T-cell (primary cell): ENCODE measurements at regions of chr14 and their contacts with region 1.

Region 1: GRCh38 chr14:97572583-97573458 is 775.6 kb downstream of the VRK1 start:
- DNase-seq: no peak
- ATAC-seq: no peak
- H3K4me3 ChIP-seq: no peak overlapping the region
- H3K4me3 Mint-ChIP-seq: no peak overlapping the region
- H3K27ac ChIP-seq: no peak overlapping the region
- H3K27ac Mint-ChIP-seq: no peak overlapping the region
- H3K4me1 ChIP-seq: no peaks in the 10 kb centered on the region
- H3K4me1 Mint-ChIP-seq: peaks cover 3 to 6% (median 5%) of the 10 kb centered on the region in 3 donors
- H3K27me3 ChIP-seq: no peaks in the 10 kb centered on the region
- H3K27me3 Mint-ChIP-seq: no peaks in the 10 kb centered on the region

Region 2: GRCh38 chr14:96017882-96018281 is 1554.9 kb before region 1 on chr14:
- CTCF ChIA-PET with region 1: no interaction called
- POLR2A ChIA-PET with region 1: no interaction called
- DNase-seq: no peak
- ATAC-seq: no peak
- H3K4me3 ChIP-seq: no peak overlapping the region
- H3K4me3 Mint-ChIP-seq: no peak overlapping the region
- H3K27ac ChIP-seq: no peak overlapping the region
- H3K27ac Mint-ChIP-seq: no peak overlapping the region
- H3K4me1 ChIP-seq: no peaks in the 10 kb centered on the region
- H3K4me1 Mint-ChIP-seq: no peaks in the 10 kb centered on the region
- H3K27me3 ChIP-seq: peaks cover 0 to 15% of the 10 kb centered on the region in 2 experiments
- H3K27me3 Mint-ChIP-seq: peaks cover 41 to 48% of the 10 kb centered on the region in 2 donors

Region 3: DNA sequence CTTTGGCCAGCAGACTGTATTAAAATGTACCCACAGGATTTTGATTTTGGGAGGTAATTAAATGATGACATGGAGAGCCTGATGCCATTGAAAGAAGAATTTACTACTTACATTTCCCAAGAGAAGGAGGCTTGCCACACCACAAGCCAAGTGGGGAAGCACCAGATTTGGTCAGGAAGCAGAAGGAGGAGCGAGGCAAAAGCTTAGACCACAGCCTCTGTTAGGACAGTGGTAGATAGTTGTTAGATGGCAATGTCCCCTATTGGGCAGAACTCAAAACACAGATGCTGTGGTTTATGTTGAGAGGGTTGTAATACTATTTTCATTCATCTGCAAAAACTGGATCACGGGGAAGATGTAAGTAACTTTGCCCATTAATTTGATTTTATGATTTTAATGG is 66.2 kb before region 1 on chr14:
- CTCF ChIA-PET with region 1: no interaction called
- POLR2A ChIA-PET with region 1: no interaction called
- DNase-seq: no peak
- ATAC-seq: no peak
- H3K4me3 ChIP-seq: no peak overlapping the region
- H3K4me3 Mint-ChIP-seq: no peak overlapping the region
- H3K27ac ChIP-seq: no peak overlapping the region
- H3K27ac Mint-ChIP-seq: no peak overlapping the region
- H3K4me1 ChIP-seq: no peaks in the 10 kb centered on the region
- H3K4me1 Mint-ChIP-seq: peaks cover 0 to 3% (median 0%) of the 10 kb centered on the region in 3 donors
- H3K27me3 ChIP-seq: no peaks in the 10 kb centered on the region
- H3K27me3 Mint-ChIP-seq: no peaks in the 10 kb centered on the region

Region 4: DNA sequence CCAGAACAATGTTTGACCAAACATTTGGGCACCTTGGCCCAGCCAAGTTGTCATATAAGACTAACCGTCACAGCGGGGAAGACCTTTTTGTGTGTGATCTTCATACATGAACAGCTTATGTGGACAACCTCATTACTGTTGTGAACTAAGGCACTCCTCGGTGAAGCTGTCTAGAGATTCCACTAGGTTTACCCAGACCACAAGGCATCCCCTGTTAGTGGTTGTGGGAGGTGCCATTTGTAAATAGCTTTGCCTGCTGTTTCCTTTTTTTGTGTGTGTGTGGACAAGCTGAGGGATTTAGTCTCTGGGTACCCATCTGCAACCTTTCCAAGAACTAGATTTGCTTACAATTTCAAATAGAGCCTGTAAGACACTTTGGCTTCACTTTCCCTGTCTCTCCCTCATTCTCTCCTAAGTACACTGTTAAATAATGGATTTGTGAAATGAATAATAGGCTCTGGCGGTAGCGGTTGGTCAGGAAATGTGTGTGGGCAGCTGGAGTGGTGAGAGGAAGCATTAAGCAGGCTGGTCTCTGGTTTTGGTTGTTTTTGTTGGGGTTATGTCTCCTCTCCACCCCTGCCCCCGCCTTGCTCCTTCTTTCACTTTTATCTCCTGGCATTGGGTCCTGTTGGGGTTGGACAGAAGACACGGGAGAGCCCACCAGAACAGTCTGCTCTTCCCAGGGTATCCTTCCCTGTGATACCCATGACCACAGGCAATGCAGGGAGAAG is 48.1 kb before region 1 on chr14:
- CTCF ChIA-PET with region 1: no interaction called
- POLR2A ChIA-PET with region 1: interaction called in 1 of 2 experiments, 13 read pairs
- DNase-seq: no peak
- ATAC-seq: no peak
- H3K4me3 ChIP-seq: no peak overlapping the region
- H3K4me3 Mint-ChIP-seq: peak overlapping the region in 2 of 3 donors; percentile 25 to 27
- H3K27ac ChIP-seq: no peak overlapping the region
- H3K27ac Mint-ChIP-seq: peak overlapping the region in 1 of 2 donors; percentile 6
- H3K4me1 ChIP-seq: peaks cover 0 to 10% of the 10 kb centered on the region in 2 experiments
- H3K4me1 Mint-ChIP-seq: peaks cover 7 to 14% (median 11%) of the 10 kb centered on the region in 3 donors
- H3K27me3 ChIP-seq: no peaks in the 10 kb centered on the region
- H3K27me3 Mint-ChIP-seq: no peaks in the 10 kb centered on the region

Region 5: DNA sequence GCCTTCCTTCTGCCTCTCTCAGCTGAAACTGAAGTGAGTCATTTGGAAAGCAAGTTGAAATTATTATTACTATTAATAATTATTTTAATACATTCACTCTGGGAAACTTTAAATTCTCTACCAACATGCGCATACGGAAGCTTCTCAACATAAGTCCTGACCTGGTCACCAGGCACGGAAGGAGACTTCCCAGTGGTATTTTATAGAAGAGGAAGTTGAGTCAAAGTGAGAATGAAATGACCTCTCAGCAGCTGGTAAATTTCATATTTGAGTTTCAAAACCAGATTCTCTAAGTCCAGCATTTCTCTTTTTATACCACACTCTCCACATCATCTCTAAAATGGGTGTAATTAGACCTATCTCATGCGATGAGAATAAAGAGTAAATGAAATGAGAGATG is 28.2 kb before region 1 on chr14:
- CTCF ChIA-PET with region 1: no interaction called
- POLR2A ChIA-PET with region 1: no interaction called
- DNase-seq: no peak
- ATAC-seq: no peak
- H3K4me3 ChIP-seq: no peak overlapping the region
- H3K4me3 Mint-ChIP-seq: no peak overlapping the region
- H3K27ac ChIP-seq: no peak overlapping the region
- H3K27ac Mint-ChIP-seq: peak overlapping the region in 1 of 2 donors; percentile 66
- H3K4me1 ChIP-seq: peaks cover 3 to 9% of the 10 kb centered on the region in 2 experiments
- H3K4me1 Mint-ChIP-seq: peaks cover 20 to 22% (median 21%) of the 10 kb centered on the region in 3 donors
- H3K27me3 ChIP-seq: no peaks in the 10 kb centered on the region
- H3K27me3 Mint-ChIP-seq: no peaks in the 10 kb centered on the region